ENCODE measurements at regions of chr20 and their contacts with region 1.

Region 1: DNA sequence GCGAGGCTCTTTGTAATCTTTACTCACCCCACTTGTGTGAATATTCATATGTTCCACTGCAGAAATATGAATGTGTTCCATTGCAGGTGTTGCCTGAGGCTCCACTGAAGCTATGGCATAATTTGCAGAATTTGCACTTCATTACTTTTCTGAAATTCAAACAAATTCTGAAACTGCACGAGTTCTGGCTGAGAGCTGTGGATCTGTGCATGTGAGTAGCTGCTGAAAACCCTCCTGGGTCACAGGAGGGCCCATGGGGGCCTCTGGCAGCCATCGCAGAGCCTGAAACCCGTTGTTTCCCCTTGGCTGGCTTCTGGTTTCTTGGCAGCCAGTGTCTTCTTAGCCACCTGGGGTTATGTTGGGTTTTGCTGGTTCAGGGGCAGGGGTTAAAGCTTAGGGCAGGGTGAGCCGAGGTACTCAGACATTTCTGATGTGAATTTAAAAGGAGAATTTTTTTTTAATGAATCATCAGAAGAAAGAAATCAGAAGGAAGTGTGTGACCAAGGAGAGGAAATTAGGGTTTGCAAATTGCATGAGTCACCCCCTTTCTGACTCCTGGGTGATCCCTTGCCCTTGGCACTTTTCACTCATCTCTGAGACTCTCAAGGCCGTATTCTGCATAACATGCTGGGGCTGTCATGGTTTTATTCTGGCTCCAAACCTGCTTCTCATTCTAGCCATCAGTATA is 40.6 kb downstream of the TOX2 start:
- DNase-seq: peak in 6 of 9 experiments; percentile 17 to 71 (median 62)
- ATAC-seq: peak; percentile 68
- H3K4me3 ChIP-seq: no peak overlapping the region
- H3K4me3 Mint-ChIP-seq: peak overlapping the region; percentile 54
- H3K27ac ChIP-seq: no peak overlapping the region
- H3K27ac Mint-ChIP-seq: peak overlapping the region; percentile 32
- H3K4me1 ChIP-seq: peaks cover 72% of the 10 kb centered on the region
- H3K4me1 Mint-ChIP-seq: peaks cover 86% of the 10 kb centered on the region
- H3K27me3 ChIP-seq: peaks cover 5 to 10% of the 10 kb centered on the region in 2 experiments
- H3K27me3 Mint-ChIP-seq: peaks cover 11% of the 10 kb centered on the region
- CTCF ChIP-seq: no peak

Region 2: DNA sequence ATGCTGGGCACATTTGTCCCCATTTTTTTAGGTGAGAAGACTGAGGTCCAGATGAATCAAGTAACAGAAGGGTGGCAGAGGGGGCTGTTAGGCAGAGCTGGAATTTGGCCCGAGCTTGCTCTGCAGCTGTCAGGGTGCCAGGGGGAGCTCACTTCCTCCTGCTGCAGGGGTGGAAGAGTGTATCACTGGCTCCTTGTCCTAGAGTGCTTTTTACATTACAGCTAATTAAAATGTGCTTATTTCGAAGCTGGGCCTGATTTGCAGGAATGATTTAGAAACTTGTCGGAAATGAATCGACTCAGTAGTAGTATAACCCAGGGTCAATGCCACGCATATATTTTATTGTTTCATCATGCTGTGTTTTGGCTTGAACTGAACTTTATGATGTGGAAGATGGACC is 29.4 kb before region 1 on chr20:
- CTCF ChIA-PET with region 1: no interaction called
- POLR2A ChIA-PET with region 1: no interaction called
- intact Hi-C with region 1: loop called in 1 of 2 experiments (anchors 2 kb)
- DNase-seq: peak in 5 of 9 experiments; percentile 33 to 57 (median 49)
- ATAC-seq: peak; percentile 79
- H3K4me3 ChIP-seq: peak overlapping the region in 1 of 2 experiments; percentile 6
- H3K4me3 Mint-ChIP-seq: peak overlapping the region; percentile 44
- H3K27ac ChIP-seq: no peak overlapping the region
- H3K27ac Mint-ChIP-seq: no peak overlapping the region
- H3K4me1 ChIP-seq: peaks cover 31% of the 10 kb centered on the region
- H3K4me1 Mint-ChIP-seq: peaks cover 48% of the 10 kb centered on the region
- H3K27me3 ChIP-seq: peaks cover 0 to 4% of the 10 kb centered on the region in 2 experiments
- H3K27me3 Mint-ChIP-seq: peaks cover 20% of the 10 kb centered on the region
- CTCF ChIP-seq: no peak

Region 3: DNA sequence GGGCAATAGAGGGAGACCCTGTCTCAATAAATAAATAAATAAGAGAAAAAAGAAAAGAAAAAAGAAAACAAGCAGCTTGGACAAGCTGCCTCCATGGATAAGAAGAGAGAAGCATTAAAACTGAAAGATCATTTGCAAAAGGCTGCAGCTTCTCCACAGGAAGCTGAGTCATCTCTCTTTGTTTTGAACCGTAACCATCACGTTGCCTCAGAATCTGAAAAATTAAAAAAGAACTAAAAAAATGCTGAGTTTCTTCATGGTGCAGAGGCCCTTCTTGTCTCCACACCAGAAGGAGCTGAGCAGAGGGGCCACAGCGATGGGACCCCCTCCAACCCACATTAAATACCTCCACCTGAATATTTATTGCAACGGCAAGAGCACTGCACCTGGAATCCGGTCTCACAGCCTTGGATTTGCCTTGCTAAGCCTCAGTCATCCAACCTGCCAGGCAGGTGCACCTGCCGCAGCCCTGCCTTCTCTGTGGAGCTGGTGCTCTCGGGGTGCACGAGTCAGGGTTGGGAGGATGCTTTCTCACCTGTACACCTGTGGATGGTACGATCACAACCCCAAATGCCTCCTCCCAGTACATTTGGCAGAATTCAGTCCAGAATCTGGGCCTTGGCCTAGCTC is 12.4 kb before region 1 on chr20:
- CTCF ChIA-PET with region 1: interaction called, 5 read pairs
- POLR2A ChIA-PET with region 1: interaction called, 4 read pairs
- intact Hi-C with region 1: loop called in 1 of 2 experiments (anchors 1 kb)
- DNase-seq: peak in 3 of 9 experiments; percentile 51 to 64 (median 62)
- ATAC-seq: peak; percentile 76
- H3K4me3 ChIP-seq: no peak overlapping the region
- H3K4me3 Mint-ChIP-seq: peak overlapping the region; percentile 44
- H3K27ac ChIP-seq: no peak overlapping the region
- H3K27ac Mint-ChIP-seq: peak overlapping the region; percentile 60
- H3K4me1 ChIP-seq: peaks cover 42% of the 10 kb centered on the region
- H3K4me1 Mint-ChIP-seq: peaks cover 69% of the 10 kb centered on the region
- H3K27me3 ChIP-seq: peaks cover 0 to 3% of the 10 kb centered on the region in 2 experiments
- H3K27me3 Mint-ChIP-seq: peaks cover 10% of the 10 kb centered on the region
- CTCF ChIP-seq: no peak

Region 4: GRCh38 chr20:43983359-43983758 is 28.2 kb after region 1 on chr20:
- CTCF ChIA-PET with region 1: interaction called, 3 read pairs
- POLR2A ChIA-PET with region 1: no interaction called
- intact Hi-C with region 1: loop called in 1 of 2 experiments (anchors 1 kb)
- DNase-seq: peak in 5 of 9 experiments; percentile 21 to 49 (median 36)
- ATAC-seq: no peak
- H3K4me3 ChIP-seq: no peak overlapping the region
- H3K4me3 Mint-ChIP-seq: no peak overlapping the region
- H3K27ac ChIP-seq: no peak overlapping the region
- H3K27ac Mint-ChIP-seq: no peak overlapping the region
- H3K4me1 ChIP-seq: no peaks in the 10 kb centered on the region
- H3K4me1 Mint-ChIP-seq: peaks cover 14% of the 10 kb centered on the region
- H3K27me3 ChIP-seq: peaks cover 0 to 4% of the 10 kb centered on the region in 2 experiments
- H3K27me3 Mint-ChIP-seq: peaks cover 15% of the 10 kb centered on the region
- CTCF ChIP-seq: no peak

Region 5: DNA sequence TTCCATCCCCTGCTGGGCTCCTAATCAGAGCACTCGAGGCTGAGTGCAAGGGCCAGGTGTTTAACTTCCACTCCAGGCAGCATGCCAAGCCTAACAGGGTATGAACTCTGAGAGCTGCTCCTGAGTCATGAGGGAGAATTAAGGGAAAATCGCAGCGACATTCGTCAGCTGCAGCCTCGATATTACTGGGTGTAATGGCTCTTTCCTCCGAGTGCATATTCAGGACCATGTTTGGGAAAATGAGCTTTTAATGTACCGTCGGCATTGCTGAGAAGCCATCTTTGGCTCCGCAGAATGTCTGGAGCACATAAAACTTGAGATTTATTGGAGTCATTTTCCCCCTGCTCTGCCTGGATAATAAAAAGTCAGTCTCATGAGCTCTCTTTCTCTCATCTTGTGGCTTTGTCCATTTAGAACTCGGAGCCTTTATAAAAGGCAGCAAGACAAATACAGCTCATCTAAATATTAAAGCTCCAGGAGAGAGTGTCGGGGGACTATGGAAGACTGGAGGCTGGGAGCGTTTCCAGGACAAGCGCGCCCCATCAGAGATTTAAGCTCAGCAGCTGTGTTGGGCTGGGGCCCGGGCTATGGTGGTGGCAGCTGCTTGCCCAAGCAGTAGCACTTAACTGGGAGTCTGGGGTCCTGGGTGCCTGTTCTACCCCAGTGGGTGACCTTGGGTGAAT is 63.2 kb after region 1 on chr20:
- CTCF ChIA-PET with region 1: interaction called, 3 read pairs
- POLR2A ChIA-PET with region 1: interaction called, 4 read pairs
- intact Hi-C with region 1: loop called in 1 of 2 experiments (anchors 10 kb)
- DNase-seq: peak in 1 of 9 experiments; percentile 40
- ATAC-seq: no peak
- H3K4me3 ChIP-seq: no peak overlapping the region
- H3K4me3 Mint-ChIP-seq: no peak overlapping the region
- H3K27ac ChIP-seq: no peak overlapping the region
- H3K27ac Mint-ChIP-seq: no peak overlapping the region
- H3K4me1 ChIP-seq: peaks cover 24% of the 10 kb centered on the region
- H3K4me1 Mint-ChIP-seq: peaks cover 30% of the 10 kb centered on the region
- H3K27me3 ChIP-seq: peaks cover 0 to 12% of the 10 kb centered on the region in 2 experiments
- H3K27me3 Mint-ChIP-seq: peaks cover 12% of the 10 kb centered on the region
- CTCF ChIP-seq: no peak